ENCODE measurements at regions of chr6 and their contacts with region 1.

Region 1: GRCh38 chr6:138943089-138943625 is 44.9 kb downstream of the REPS1 start:
- DNase-seq: no peak
- H3K4me3 ChIP-seq: no peak overlapping the region
- H3K27ac ChIP-seq: no peak overlapping the region
- H3K4me1 ChIP-seq: no peaks in the 10 kb centered on the region
- CTCF ChIP-seq: no peak

Region 2: DNA sequence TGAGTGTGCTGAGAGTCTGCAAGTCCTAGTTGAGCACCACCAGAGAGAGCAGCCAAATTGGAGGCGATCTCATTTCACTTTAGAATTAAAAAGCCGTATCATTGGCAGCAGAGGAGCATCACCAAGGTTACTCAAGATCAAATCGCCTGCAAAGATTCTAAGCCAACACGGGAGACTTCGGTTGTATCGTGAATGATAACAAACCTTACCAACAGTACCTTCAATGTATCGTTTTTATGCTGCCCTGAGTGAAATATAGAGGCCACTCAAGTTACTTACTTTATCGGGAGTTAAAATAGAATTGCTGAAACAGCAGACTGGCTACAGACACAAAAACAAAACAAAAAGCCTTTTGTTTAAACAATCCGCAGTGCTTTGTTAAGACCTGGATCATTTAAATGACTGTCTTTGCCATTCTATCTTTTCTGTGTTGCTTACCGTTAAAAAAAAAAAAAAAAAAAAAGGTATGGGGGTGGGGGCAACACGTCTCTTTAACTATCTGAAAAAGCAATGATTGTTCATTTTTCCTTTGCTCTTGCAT is 458.1 kb before region 1 on chr6:
- CTCF ChIA-PET with region 1: no interaction called
- POLR2A ChIA-PET with region 1: no interaction called
- intact Hi-C with region 1: no loop called
- DNase-seq: no peak
- H3K4me3 ChIP-seq: no peak overlapping the region
- H3K27ac ChIP-seq: no peak overlapping the region
- H3K4me1 ChIP-seq: no peaks in the 10 kb centered on the region
- CTCF ChIP-seq: no peak

Region 3: GRCh38 chr6:138931660-138932059 is 11.5 kb before region 1 on chr6:
- CTCF ChIA-PET with region 1: no interaction called
- POLR2A ChIA-PET with region 1: interaction called, 10 read pairs
- intact Hi-C with region 1: no loop called
- DNase-seq: no peak
- H3K4me3 ChIP-seq: no peak overlapping the region
- H3K27ac ChIP-seq: no peak overlapping the region
- H3K4me1 ChIP-seq: no peaks in the 10 kb centered on the region
- CTCF ChIP-seq: no peak